Posterior vena cava (tissue), 2 donors: ENCODE measurements at regions of chr15 and their contacts with region 1.

Region 1: GRCh38 chr15:60223176-60223575 is 174.6 kb downstream of the ANXA2 start:
- DNase-seq: no peak

Region 2: GRCh38 chr15:60264566-60264965 is 41.4 kb after region 1 on chr15:
- intact Hi-C with region 1: loop called in 1 of 2 experiments (anchors 1 kb)
- DNase-seq: no peak